Activated CD4-positive, alpha-beta T cell treated with anti-CD3 and anti-CD28 coated beads for 36 hours (primary cell): ENCODE measurements at regions of chr7 and their contacts with region 1.

Region 1: GRCh38 chr7:131203291-131203976 is 124.2 kb upstream of the MKLN1 start:
- DNase-seq: no peak
- ATAC-seq: no peak
- H3K4me3 Mint-ChIP-seq: no peak overlapping the region
- H3K27ac Mint-ChIP-seq: no peak overlapping the region
- H3K4me1 Mint-ChIP-seq: no peaks in the 10 kb centered on the region
- H3K27me3 Mint-ChIP-seq: no peaks in the 10 kb centered on the region

Region 2: GRCh38 chr7:131174391-131174790 is 29.0 kb before region 1 on chr7:
- CTCF ChIA-PET with region 1: interaction called, 3 read pairs
- POLR2A ChIA-PET with region 1: no interaction called
- intact Hi-C with region 1: loop called in 1 of 2 experiments (anchors 2 kb)
- DNase-seq: no peak
- ATAC-seq: no peak
- H3K4me3 Mint-ChIP-seq: no peak overlapping the region
- H3K27ac Mint-ChIP-seq: no peak overlapping the region
- H3K4me1 Mint-ChIP-seq: no peaks in the 10 kb centered on the region
- H3K27me3 Mint-ChIP-seq: peaks cover 2% of the 10 kb centered on the region